ENCODE measurements at regions of chr7 and their contacts with region 1.

Region 1: GRCh38 chr7:158976849-158977593 is 120.7 kb downstream of the DYNC2I1 start:
- DNase-seq: peak; percentile 57 to 97
- H3K4me3 ChIP-seq: peak overlapping the region in 2 of 4 experiments; percentile 14 to 49; a peak in 3 of 8 replicates
- H3K27ac ChIP-seq: no peak overlapping the region
- H3K4me1 ChIP-seq: peaks cover 0 to 6% (median 2%) of the 10 kb centered on the region in 4 experiments; a peak in 3 of 7 replicates
- H3K27me3 ChIP-seq: no peaks in the 10 kb centered on the region; a peak in 1 of 7 replicates
- CTCF ChIP-seq: peak; percentile 69 to 86 (median 73)
- EP300 ChIP-seq: no peak
- POLR2A ChIP-seq: no peak
- RAD21 ChIP-seq: peak; percentile 83 to 85

Region 2: DNA sequence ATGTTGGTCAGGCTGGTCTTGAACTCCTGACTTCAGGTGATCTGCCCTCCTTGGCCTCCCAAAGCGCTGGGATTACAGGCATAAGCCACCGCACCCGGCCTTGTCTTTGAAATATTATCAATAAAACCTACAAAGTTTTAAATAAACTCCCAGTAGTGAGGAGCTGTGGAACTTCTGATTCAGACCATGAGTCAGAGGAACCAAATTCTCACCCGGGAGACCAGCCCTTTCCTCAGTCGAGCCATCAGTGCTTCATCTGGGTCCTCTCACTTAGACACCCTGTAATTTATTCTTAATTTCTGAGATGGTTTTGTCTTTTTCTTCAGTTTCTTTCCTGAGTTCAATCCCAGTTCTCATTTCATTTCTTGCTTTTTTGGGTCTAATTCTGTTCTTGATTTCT is 52.1 kb before region 1 on chr7:
- CTCF ChIA-PET with region 1: interaction called, 11 read pairs
- POLR2A ChIA-PET with region 1: no interaction called
- DNase-seq: no peak
- H3K4me3 ChIP-seq: no peak overlapping the region
- H3K27ac ChIP-seq: no peak overlapping the region
- H3K4me1 ChIP-seq: no peaks in the 10 kb centered on the region
- H3K27me3 ChIP-seq: no peaks in the 10 kb centered on the region
- CTCF ChIP-seq: no peak
- EP300 ChIP-seq: no peak
- POLR2A ChIP-seq: no peak
- RAD21 ChIP-seq: no peak

Region 3: DNA sequence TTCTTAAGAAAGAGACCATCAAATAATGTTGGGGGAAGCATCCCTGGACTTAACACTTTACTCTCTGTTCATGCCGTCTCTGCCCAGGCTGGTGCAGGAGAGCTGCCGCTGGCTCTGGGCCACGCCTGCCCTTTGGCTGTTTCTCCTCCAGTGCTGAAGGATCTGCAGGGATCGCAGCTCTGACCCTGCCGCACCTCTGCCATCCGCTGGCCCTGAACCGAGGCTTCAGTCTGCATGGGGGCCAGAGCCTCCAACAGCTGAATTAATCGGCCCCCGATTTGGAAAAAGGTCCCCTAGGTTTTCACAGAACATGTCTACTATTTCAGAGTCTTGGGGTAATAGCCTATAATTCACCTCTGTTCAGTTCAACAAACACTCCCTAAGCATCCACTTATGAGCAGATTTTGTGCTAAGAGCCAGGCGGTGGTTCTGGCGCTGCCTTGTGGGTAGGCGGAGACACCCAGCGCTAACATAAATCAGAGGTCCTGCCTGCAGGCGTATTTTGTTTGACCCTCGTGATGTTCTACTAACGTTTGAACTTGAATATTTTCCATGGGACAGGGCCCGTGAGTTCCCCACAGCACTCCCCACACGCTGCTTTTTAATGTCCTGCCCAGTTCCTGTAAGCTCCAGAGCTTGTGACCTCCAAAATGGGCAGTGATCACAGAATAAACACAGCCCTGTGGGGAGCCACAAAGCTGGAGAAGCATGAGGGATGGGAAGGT is 21.7 kb before region 1 on chr7:
- CTCF ChIA-PET with region 1: interaction called, 16 read pairs
- POLR2A ChIA-PET with region 1: no interaction called
- DNase-seq: no peak
- H3K4me3 ChIP-seq: no peak overlapping the region
- H3K27ac ChIP-seq: no peak overlapping the region
- H3K4me1 ChIP-seq: no peaks in the 10 kb centered on the region; a peak in 1 of 7 replicates
- H3K27me3 ChIP-seq: no peaks in the 10 kb centered on the region
- CTCF ChIP-seq: no peak
- EP300 ChIP-seq: no peak
- POLR2A ChIP-seq: no peak
- RAD21 ChIP-seq: no peak

Region 4: DNA sequence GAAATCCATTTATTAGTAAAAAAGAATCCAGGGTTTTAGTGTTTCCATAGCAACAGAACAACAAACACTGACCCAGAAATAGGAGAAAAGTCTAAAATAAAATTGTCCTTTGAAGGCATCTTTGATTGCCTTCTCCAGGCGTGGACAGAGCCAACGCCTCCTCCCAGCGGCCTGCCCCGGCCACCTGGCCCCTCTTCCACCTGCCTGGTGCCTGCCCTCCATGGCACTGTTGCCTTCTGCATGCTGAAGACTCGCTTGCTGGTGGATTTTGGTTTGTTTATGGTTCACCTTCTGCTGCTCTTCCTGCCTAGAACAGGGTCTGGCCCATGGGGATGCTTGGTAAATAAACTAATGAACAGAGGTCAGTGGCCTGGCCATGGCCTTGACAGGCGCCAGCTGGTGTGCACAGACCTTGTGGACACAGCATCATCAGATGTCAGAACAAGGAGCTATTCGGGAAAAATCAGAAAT is 13.2 kb before region 1 on chr7:
- CTCF ChIA-PET with region 1: interaction called, 15 read pairs
- POLR2A ChIA-PET with region 1: no interaction called
- DNase-seq: no peak
- H3K4me3 ChIP-seq: no peak overlapping the region
- H3K27ac ChIP-seq: no peak overlapping the region
- H3K4me1 ChIP-seq: no peaks in the 10 kb centered on the region
- H3K27me3 ChIP-seq: no peaks in the 10 kb centered on the region
- CTCF ChIP-seq: no peak
- EP300 ChIP-seq: no peak
- POLR2A ChIP-seq: no peak
- RAD21 ChIP-seq: no peak

Region 5: GRCh38 chr7:158991824-158992583 is 15.0 kb after region 1 on chr7:
- CTCF ChIA-PET with region 1: interaction called, 49 read pairs
- POLR2A ChIA-PET with region 1: no interaction called
- DNase-seq: no peak
- H3K4me3 ChIP-seq: peak overlapping the region in 1 of 4 experiments; percentile 50; a peak in 3 of 8 replicates
- H3K27ac ChIP-seq: no peak overlapping the region
- H3K4me1 ChIP-seq: peaks cover 0 to 2% (median 0%) of the 10 kb centered on the region in 4 experiments; a peak in 1 of 7 replicates
- H3K27me3 ChIP-seq: peaks cover 5 to 52% (median 35%) of the 10 kb centered on the region in 4 experiments
- CTCF ChIP-seq: no peak
- EP300 ChIP-seq: no peak
- POLR2A ChIP-seq: no peak
- RAD21 ChIP-seq: no peak

Region 6: GRCh38 chr7:159000859-159001435 is 23.9 kb after region 1 on chr7:
- CTCF ChIA-PET with region 1: interaction called, 13 read pairs
- POLR2A ChIA-PET with region 1: no interaction called
- DNase-seq: no peak
- H3K4me3 ChIP-seq: no peak overlapping the region
- H3K27ac ChIP-seq: no peak overlapping the region
- H3K4me1 ChIP-seq: peaks cover 0 to 8% (median 1%) of the 10 kb centered on the region in 4 experiments; a peak in 2 of 7 replicates
- H3K27me3 ChIP-seq: peaks cover 10 to 19% (median 18%) of the 10 kb centered on the region in 4 experiments
- CTCF ChIP-seq: peak; percentile 37 to 43 (median 41); a peak in 3 of 4 replicates
- EP300 ChIP-seq: no peak
- POLR2A ChIP-seq: no peak
- RAD21 ChIP-seq: peak; percentile 36 to 46; a peak in 3 of 4 replicates

Region 7: GRCh38 chr7:159030490-159031134 is 53.6 kb after region 1 on chr7:
- CTCF ChIA-PET with region 1: interaction called, 15 read pairs
- POLR2A ChIA-PET with region 1: no interaction called
- DNase-seq: peak; percentile 27 to 87
- H3K4me3 ChIP-seq: peak overlapping the region; percentile 50 to 74 (median 64)
- H3K27ac ChIP-seq: no peak overlapping the region
- H3K4me1 ChIP-seq: peaks cover 0 to 20% (median 13%) of the 10 kb centered on the region in 4 experiments; a peak in 6 of 7 replicates
- H3K27me3 ChIP-seq: peaks cover 0 to 3% (median 2%) of the 10 kb centered on the region in 4 experiments; a peak in 3 of 7 replicates
- CTCF ChIP-seq: peak in 2 of 3 experiments; percentile 47 to 50; a peak in 3 of 4 replicates
- EP300 ChIP-seq: no peak
- POLR2A ChIP-seq: no peak; a peak in 1 of 3 replicates
- RAD21 ChIP-seq: peak; percentile 32 to 37; a peak in 3 of 4 replicates

Region 8: DNA sequence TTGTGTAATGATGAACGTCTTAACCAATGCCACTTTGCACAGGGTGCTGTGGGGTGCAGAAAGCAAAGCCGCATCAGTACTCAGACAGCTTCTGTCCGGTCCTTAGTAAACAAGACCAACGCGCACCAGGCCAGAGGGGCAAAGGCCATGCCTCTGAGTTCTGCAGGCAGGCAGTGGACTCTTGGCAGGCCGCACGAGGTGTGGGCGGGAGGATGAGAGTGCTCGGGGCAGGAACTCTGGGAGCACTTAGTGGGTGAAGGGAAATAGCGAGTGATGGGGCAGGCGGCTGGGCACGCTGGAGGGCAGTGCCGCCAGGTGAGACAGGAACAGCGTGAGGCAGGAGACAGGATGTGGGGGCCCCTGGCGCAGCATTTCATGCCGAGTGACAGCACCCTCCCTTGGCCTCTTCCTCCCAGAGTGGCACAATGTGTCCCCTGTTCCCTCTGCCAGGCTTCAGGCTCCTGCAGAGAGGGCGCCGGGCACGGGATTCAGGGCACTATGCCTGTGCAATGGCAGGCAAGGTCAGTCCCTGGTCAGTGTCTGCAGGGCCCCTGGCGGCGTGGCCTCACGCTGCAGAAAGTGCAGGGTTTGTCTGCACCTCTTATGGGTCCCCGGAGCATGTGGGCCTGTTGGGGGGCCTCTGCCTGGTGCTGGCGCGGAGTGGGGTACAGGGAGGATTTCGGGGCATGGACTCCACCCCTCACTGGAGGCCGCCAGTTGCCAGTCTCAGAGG is 107.2 kb after region 1 on chr7:
- CTCF ChIA-PET with region 1: no interaction called
- POLR2A ChIA-PET with region 1: no interaction called
- DNase-seq: no peak
- H3K4me3 ChIP-seq: no peak overlapping the region
- H3K27ac ChIP-seq: no peak overlapping the region
- H3K4me1 ChIP-seq: no peaks in the 10 kb centered on the region
- H3K27me3 ChIP-seq: no peaks in the 10 kb centered on the region
- CTCF ChIP-seq: no peak
- EP300 ChIP-seq: no peak
- POLR2A ChIP-seq: no peak
- RAD21 ChIP-seq: no peak